ENCODE measurements at regions of chr2 and their contacts with region 1.

Region 1: DNA sequence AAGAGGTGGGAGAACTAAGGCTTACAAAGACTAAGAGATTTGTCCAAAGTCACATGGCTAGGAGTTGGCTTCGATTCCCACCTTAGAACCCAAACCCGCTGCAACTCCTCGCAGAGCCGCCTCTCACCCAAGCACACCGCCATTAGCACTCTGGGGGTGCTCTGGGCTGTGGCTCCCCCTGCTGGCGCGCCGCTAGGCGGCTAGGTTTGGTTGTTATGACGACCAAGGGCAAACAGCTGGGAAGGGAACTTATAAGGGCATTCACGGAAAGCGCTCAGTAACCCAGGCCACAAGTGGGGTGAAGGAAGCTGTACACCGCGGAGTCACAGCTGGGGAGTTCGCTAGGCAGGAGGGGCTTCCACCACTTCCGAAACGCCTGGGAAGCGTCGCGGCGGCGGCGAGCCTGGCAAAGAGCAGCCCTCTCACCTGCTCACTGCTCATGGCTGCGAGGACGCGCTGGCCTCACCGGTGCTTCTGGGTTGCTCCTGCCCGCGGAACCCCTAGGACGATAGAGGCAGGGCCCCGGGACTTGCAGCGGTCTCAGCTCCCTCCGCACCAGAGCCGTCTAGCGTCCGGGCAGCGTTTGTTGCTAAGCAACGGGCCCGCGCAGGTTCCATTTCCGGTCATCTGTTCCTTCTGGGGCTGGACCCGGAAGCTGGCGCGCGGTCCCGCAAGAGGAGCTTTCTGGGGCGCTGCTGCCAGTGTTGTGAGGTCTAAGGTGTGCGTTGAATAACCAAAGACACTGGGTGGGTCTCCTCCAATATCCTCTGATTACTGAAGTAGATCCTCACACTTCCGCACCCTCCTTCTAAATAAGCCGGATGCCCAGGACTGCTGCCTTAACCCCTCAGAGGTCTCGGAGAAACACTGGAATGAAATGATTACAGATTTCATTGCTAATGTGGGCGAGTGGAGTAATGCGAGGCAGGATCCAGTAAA is at the start of gene DNAH7:
- DNase-seq: peak; percentile 89 to 94
- H3K4me3 ChIP-seq: peak within 1 kb of the TSS; percentile 75
- H3K4me3 Mint-ChIP-seq: peak within 1 kb of the TSS; percentile 90
- H3K27ac Mint-ChIP-seq: peak within 1 kb of the TSS; percentile 97
- H3K4me1 ChIP-seq: peaks cover 4% of the 10 kb centered on the region; the same call in 1 of the 2 replicates
- H3K4me1 Mint-ChIP-seq: no peaks in the 10 kb centered on the region
- H3K27me3 ChIP-seq: no peaks in the 10 kb centered on the region
- H3K27me3 Mint-ChIP-seq: peaks cover 3% of the 10 kb centered on the region
- CTCF ChIP-seq: peak; percentile 86 to 97
- total RNA-seq, gene DNAH7: 0.16 and 0.30 TPM in 2 replicates

Region 2: DNA sequence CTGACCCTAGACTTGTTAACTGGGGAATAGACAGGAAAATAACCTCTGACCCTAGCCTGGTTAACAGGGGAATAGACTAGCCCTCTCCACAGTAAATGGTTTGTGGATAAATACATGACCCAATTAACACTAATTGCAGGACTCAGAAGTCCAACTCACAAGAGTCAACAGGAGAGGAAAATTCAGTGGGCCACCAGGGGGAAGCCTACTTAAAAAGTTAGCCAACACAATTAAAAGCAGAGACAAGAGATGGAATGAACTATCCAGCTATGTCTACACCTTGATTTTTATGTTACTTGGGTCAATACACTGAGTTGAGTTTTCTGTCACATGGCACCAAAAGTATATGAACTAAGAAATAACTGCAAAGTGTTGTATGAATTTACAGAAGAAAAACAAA is 570.4 kb before region 1 on chr2:
- CTCF ChIA-PET with region 1: no interaction called
- POLR2A ChIA-PET with region 1: no interaction called
- intact Hi-C with region 1: loop called (anchors 1 kb)
- DNase-seq: peak; percentile 52 to 54
- H3K4me3 ChIP-seq: no peak overlapping the region
- H3K4me3 Mint-ChIP-seq: no peak overlapping the region
- H3K27ac Mint-ChIP-seq: no peak overlapping the region
- H3K4me1 ChIP-seq: no peaks in the 10 kb centered on the region
- H3K4me1 Mint-ChIP-seq: no peaks in the 10 kb centered on the region
- H3K27me3 ChIP-seq: no peaks in the 10 kb centered on the region
- H3K27me3 Mint-ChIP-seq: peaks cover 4% of the 10 kb centered on the region
- CTCF ChIP-seq: peak; percentile 45 to 51

Region 3: GRCh38 chr2:195575879-195576401 is 492.6 kb before region 1 on chr2:
- CTCF ChIA-PET with region 1: no interaction called
- POLR2A ChIA-PET with region 1: no interaction called
- intact Hi-C with region 1: loop called (anchors 2 kb)
- DNase-seq: no peak
- H3K4me3 ChIP-seq: no peak overlapping the region
- H3K4me3 Mint-ChIP-seq: no peak overlapping the region
- H3K27ac Mint-ChIP-seq: no peak overlapping the region
- H3K4me1 ChIP-seq: peaks cover 13% of the 10 kb centered on the region
- H3K4me1 Mint-ChIP-seq: peaks cover 7% of the 10 kb centered on the region
- H3K27me3 ChIP-seq: no peaks in the 10 kb centered on the region
- H3K27me3 Mint-ChIP-seq: no peaks in the 10 kb centered on the region
- CTCF ChIP-seq: peak in 1 of 2 experiments; percentile 37

Region 4: DNA sequence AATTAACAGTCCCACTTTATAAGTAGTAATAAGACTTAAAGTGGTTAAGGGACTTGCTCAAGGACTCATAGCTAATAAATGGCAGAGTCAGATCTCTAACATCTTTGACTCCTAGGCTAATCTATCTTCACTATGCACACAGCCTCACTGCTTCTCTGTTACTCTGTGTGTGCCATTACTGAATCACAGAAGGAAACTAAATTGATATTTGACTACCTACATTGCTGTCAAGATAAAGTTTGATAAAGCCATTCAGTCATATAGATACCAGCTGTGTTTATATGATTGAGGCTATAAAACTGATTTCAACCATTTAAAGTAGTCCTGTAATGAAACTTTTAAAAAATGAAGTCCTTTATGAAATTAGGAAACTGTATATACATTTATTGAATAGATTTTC is 400.6 kb before region 1 on chr2:
- CTCF ChIA-PET with region 1: no interaction called
- POLR2A ChIA-PET with region 1: no interaction called
- intact Hi-C with region 1: loop called (anchors 1 kb)
- DNase-seq: no peak
- H3K4me3 ChIP-seq: no peak overlapping the region
- H3K4me3 Mint-ChIP-seq: no peak overlapping the region
- H3K27ac Mint-ChIP-seq: no peak overlapping the region
- H3K4me1 ChIP-seq: no peaks in the 10 kb centered on the region
- H3K4me1 Mint-ChIP-seq: no peaks in the 10 kb centered on the region
- H3K27me3 ChIP-seq: no peaks in the 10 kb centered on the region
- H3K27me3 Mint-ChIP-seq: no peaks in the 10 kb centered on the region
- CTCF ChIP-seq: no peak

Region 5: GRCh38 chr2:195857132-195857531 is 211.4 kb before region 1 on chr2:
- CTCF ChIA-PET with region 1: no interaction called
- POLR2A ChIA-PET with region 1: no interaction called
- intact Hi-C with region 1: loop called (anchors 5 kb)
- DNase-seq: no peak
- H3K4me3 ChIP-seq: no peak overlapping the region
- H3K4me3 Mint-ChIP-seq: no peak overlapping the region
- H3K27ac Mint-ChIP-seq: no peak overlapping the region
- H3K4me1 ChIP-seq: no peaks in the 10 kb centered on the region
- H3K4me1 Mint-ChIP-seq: no peaks in the 10 kb centered on the region
- H3K27me3 ChIP-seq: no peaks in the 10 kb centered on the region
- H3K27me3 Mint-ChIP-seq: peaks cover 7% of the 10 kb centered on the region
- CTCF ChIP-seq: no peak

Region 6: DNA sequence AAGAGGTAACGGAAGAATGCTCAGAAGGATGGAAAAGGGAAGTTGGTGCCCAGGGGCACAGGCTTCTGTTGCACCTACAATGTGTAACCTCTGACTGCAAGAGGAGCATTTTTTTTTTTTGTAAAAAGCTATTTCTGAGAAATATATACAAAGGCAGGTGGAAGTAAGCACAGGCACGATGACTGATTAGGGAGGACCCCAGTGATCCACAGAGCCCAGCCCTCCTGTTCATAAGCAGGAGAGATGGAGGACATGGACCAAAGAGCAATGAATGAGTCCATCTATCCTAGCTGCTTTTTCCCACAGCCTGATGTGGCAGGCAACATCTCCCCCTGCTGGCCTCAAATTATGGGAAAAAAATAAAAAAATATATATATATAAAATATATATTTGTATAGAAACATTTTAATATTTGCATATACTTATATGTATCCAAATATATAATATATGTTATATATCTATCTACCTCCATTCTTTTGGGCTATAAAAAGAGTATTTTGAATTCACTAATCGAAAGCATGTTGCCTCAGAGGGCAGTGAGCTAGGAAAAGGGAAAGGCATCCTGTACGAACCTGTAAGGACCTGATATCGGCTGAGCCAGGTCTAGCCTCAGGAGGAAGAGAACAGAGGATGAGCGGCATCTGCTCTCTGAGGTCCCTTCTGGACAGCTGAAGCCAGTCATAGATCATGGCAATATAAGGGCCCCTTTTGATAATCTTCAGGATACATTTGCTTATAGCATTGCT is 268.8 kb after region 1 on chr2:
- CTCF ChIA-PET with region 1: interaction called, 8 read pairs
- POLR2A ChIA-PET with region 1: no interaction called
- intact Hi-C with region 1: loop called (anchors 2 kb)
- DNase-seq: peak in 1 of 2 experiments; percentile 34
- H3K4me3 ChIP-seq: no peak overlapping the region
- H3K4me3 Mint-ChIP-seq: no peak overlapping the region
- H3K27ac Mint-ChIP-seq: no peak overlapping the region
- H3K4me1 ChIP-seq: peaks cover 7% of the 10 kb centered on the region; the same call in 1 of the 2 replicates
- H3K4me1 Mint-ChIP-seq: peaks cover 7% of the 10 kb centered on the region
- H3K27me3 ChIP-seq: no peaks in the 10 kb centered on the region
- H3K27me3 Mint-ChIP-seq: no peaks in the 10 kb centered on the region
- CTCF ChIP-seq: peak; percentile 25 to 72

Measured in Caco-2 (cell line).